Motor neuron (in vitro differentiated cells): ENCODE measurements at regions of chr5 and their contacts with region 1.

Region 1: GRCh38 chr5:78345485-78345884 is 14.9 kb upstream of the SCAMP1 start:
- ATAC-seq: peak in 5 of 8 experiments; percentile 52 to 96 (median 82)
- H3K4me3 ChIP-seq: no peak overlapping the region
- H3K27ac ChIP-seq: peak overlapping the region in 1 of 2 donors; percentile 23
- H3K4me1 ChIP-seq: peaks cover 0 to 4% of the 10 kb centered on the region in 2 donors

Region 2: DNA sequence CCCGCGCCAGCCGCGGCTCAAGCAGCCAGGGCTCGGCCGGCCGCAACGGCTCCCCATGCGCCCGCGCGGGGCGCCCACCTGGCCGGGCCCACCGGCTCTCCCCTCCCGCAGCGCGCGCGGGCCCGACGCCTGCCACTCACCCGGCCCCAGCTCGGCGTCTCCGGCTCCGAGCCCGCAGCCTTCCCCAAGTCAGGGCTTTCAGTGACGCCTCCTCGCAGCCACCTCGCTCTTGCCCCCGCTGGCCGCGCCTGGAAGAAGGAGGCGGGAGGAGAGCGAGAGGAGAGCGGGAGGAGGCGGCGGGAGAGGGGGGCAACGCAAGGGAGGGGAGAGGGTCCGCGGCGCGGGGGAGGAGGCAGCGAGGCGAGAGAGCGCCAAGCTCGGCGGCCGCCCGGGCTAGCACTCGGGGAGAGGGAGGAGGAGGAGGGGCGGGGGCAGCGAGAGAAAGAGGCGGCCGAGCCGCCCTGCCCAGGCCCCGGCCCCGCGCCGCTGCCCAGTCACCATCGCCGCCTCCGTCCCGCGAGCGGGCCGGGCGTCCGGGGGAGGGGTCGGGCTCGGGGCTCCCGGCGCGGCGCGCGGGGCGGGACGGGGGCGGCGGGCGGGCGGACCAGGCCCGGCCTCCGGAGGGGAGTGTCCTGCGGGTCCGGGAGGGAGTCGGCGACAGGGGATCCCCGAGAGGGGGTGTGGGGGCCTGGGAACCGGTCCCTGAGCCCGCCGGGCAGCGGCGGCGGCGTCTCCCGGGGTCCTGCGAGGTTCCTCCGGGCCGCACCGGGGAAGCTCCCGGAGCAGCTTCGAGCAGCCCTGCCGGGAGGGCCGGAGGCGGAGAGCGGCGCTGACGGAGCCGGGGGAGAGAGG is 303.1 kb after region 1 on chr5 and contains the start of gene LHFPL2:
- in situ Hi-C with region 1: loop called in 1 of 9 experiments (anchors 25 kb)
- ATAC-seq: peak; percentile 71 to 88 (median 84)
- H3K4me3 ChIP-seq: peak within 1 kb of the TSS; percentile 50 to 80 (median 59)
- H3K27ac ChIP-seq: peak within 1 kb of the TSS; percentile 41 to 53
- H3K4me1 ChIP-seq: peaks cover 13 to 22% of the 10 kb centered on the region in 2 donors
- total RNA-seq, gene LHFPL2: 3.1 to 62.1 (median 8.3) TPM

Region 3: GRCh38 chr5:78717674-78718625 is 372.5 kb after region 1 on chr5:
- in situ Hi-C with region 1: no loop called
- ATAC-seq: peak in 5 of 8 experiments; percentile 47 to 88 (median 66)
- H3K4me3 ChIP-seq: no peak overlapping the region
- H3K27ac ChIP-seq: no peak overlapping the region
- H3K4me1 ChIP-seq: no peaks in the 10 kb centered on the region